ENCODE measurements at regions of chr12 and their contacts with region 1.

Region 1: GRCh38 chr12:110023059-110023606 is 23.9 kb downstream of the ANKRD13A start:
- DNase-seq: peak; percentile 82
- H3K4me3 ChIP-seq: no peak overlapping the region
- H3K27ac ChIP-seq: peak overlapping the region; percentile 91
- H3K27me3 ChIP-seq: no peaks in the 10 kb centered on the region
- CTCF ChIP-seq: no peak

Region 2: GRCh38 chr12:109951751-109952150 is 71.4 kb before region 1 on chr12:
- CTCF ChIA-PET with region 1: no interaction called
- POLR2A ChIA-PET with region 1: no interaction called
- DNase-seq: peak; percentile 85
- H3K4me3 ChIP-seq: no peak overlapping the region
- H3K27ac ChIP-seq: peak overlapping the region; percentile 99
- H3K27me3 ChIP-seq: no peaks in the 10 kb centered on the region
- CTCF ChIP-seq: peak; percentile 20; the same call in 1 of the 2 replicates

Region 3: GRCh38 chr12:110001545-110001961 is 21.6 kb before region 1 on chr12:
- CTCF ChIA-PET with region 1: interaction called, 4 read pairs
- POLR2A ChIA-PET with region 1: interaction called, 18 read pairs
- DNase-seq: no peak
- H3K4me3 ChIP-seq: peak overlapping the region; percentile 91
- H3K27ac ChIP-seq: peak overlapping the region; percentile 81
- H3K27me3 ChIP-seq: no peaks in the 10 kb centered on the region
- CTCF ChIP-seq: no peak

Region 4: DNA sequence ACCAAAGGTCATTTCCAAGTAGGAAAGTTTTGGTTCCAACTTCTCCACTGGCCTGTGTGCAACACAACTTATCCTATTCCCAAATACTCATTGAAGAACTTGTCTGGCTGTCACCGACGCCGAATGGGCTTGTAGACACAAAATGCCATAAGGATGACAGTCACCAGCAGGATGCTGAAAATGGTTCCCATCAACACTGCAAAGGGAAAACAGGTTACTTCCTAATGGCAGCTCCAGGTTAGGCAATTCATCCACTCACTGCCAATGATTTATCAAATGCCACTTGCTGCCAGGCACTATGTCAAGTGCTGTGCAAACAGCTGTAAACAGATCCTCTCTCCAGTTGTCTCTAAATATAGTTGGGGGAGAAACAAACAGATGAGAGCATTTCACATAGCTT is 19.1 kb after region 1 on chr12:
- CTCF ChIA-PET with region 1: interaction called, 12 read pairs
- POLR2A ChIA-PET with region 1: interaction called, 4 read pairs
- DNase-seq: no peak
- H3K4me3 ChIP-seq: no peak overlapping the region
- H3K27ac ChIP-seq: no peak overlapping the region
- H3K27me3 ChIP-seq: no peaks in the 10 kb centered on the region
- CTCF ChIP-seq: no peak